Activated T-helper 2 cell treated with anti-CD3 and anti-CD28 coated beads, Interferon-gamma antibody, Interleukin-2, Interleukin-4, amounts not matched to agents 10 μg/mL and 5 μg/mL and 100 μg/mL, durations not matched to agents 14 hours and 24 hours and 36 hours (primary cell): ENCODE measurements at regions of chr6 and their contacts with region 1.

Region 1: DNA sequence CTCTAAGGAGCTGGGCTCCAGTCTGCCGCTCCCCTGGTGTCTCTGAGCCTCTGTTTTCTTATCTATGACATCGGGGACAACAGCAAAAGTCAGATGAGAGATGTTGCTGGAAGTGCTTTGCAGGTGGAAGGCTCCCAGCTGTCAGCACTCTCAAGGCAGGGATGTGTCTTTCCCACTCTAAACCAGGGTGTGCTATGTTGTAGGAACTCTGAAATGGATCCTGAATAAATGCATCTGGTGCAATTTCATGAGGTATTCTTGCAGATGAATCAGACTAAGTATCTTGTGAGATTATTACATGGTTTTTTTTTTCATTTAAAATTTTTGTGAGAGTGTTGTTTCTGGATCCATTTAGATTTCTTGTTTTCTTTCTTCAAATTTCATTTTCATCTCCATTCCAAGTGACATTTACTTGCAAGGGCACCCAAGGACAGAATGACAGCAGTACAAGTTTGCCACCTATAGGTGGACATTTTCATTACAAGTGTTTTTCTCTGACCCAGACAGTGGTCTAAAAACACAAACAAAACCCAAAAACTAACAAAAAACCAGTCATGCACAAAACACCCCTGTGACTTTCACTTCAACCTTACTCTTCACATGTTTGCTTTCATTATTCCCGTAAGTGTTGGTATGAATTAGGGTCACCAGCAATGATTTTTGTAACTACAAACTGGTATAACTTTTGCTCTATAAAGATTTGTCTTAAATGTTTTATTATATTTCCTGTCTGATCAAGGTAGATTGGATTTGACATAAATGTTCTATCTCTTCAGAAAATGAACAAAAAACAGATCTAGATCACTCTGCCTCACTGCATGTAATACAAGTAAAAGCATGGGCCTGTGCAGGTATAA is 14.7 kb upstream of the SIM1 start:
- DNase-seq: no peak
- H3K4me3 Mint-ChIP-seq: no peak overlapping the region
- H3K27ac Mint-ChIP-seq: no peak overlapping the region
- H3K4me1 Mint-ChIP-seq: peaks cover 14% of the 10 kb centered on the region
- H3K27me3 Mint-ChIP-seq: peaks cover 14% of the 10 kb centered on the region

Region 2: GRCh38 chr6:99868074-99868702 is 611.2 kb before region 1 on chr6:
- intact Hi-C with region 1: loop called (anchors 10 kb)
- DNase-seq: peak; percentile 48
- H3K4me3 Mint-ChIP-seq: no peak overlapping the region
- H3K27ac Mint-ChIP-seq: no peak overlapping the region
- H3K4me1 Mint-ChIP-seq: peaks cover 3% of the 10 kb centered on the region
- H3K27me3 Mint-ChIP-seq: peaks cover 27% of the 10 kb centered on the region

Region 3: DNA sequence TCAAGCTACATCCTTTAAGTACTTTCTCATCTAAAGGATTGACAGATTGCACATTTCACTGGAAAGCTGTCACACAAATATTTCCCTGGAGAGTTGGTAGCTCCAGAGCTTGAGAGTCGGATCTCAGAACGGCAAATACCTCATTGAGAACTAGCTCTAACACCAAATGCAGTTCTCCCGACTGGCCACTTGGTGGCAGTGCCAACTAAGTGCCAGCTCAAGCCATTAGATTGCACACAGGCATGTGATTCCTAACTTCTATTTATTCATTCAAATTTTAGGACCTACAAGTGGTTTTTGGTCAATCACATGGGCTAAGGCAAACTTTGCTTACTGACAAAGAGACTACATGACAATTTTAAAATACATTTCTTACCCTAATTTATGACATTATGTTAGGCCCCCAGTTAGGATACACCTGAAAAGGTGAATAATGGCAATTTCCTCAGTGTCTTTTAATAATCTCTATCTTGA is 477.5 kb before region 1 on chr6:
- intact Hi-C with region 1: loop called (anchors 1 kb)
- DNase-seq: no peak
- H3K4me3 Mint-ChIP-seq: no peak overlapping the region
- H3K27ac Mint-ChIP-seq: no peak overlapping the region
- H3K4me1 Mint-ChIP-seq: no peaks in the 10 kb centered on the region
- H3K27me3 Mint-ChIP-seq: peaks cover 17% of the 10 kb centered on the region

Region 4: GRCh38 chr6:100116411-100117194 is 362.8 kb before region 1 on chr6:
- intact Hi-C with region 1: loop called (anchors 1 kb)
- DNase-seq: no peak
- H3K4me3 Mint-ChIP-seq: no peak overlapping the region
- H3K27ac Mint-ChIP-seq: no peak overlapping the region
- H3K4me1 Mint-ChIP-seq: peaks cover 16% of the 10 kb centered on the region
- H3K27me3 Mint-ChIP-seq: peaks cover 13% of the 10 kb centered on the region

Region 5: DNA sequence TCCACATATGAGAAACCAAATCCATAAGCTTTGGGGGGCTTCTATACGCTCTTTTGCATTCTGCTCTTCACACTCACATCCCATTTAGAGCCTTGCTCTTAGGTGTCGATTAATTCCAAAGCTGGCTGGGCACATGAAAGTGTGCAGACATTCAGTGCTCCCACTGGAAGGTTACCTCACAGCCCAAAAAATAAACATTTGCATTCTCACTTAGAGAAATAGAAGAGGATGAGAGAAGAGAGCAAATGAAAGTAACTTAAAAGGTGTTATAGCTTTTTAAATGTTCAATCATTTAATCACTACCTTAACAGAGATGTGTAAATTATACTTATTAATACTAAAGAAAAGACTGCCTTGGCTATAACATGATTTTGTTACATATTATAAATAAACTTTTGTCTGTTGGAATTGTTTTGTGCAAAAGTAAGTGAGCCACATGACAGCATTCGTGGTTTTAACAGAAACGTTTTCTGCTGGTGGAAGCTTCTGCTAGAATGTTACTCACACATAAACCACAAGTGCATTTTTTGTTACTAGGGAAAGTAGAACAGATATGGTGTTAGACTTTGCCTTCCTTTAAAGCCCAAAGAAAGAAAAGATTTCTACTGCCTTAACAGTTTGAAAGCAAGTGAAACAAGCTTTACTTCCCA is 131.4 kb before region 1 on chr6:
- intact Hi-C with region 1: loop called (anchors 10 kb)
- DNase-seq: no peak
- H3K4me3 Mint-ChIP-seq: no peak overlapping the region
- H3K27ac Mint-ChIP-seq: no peak overlapping the region
- H3K4me1 Mint-ChIP-seq: peaks cover 17% of the 10 kb centered on the region
- H3K27me3 Mint-ChIP-seq: peaks cover 5% of the 10 kb centered on the region

Region 6: GRCh38 chr6:100512203-100512862 is 32.9 kb after region 1 on chr6:
- intact Hi-C with region 1: no loop called
- DNase-seq: no peak
- H3K4me3 Mint-ChIP-seq: no peak overlapping the region
- H3K27ac Mint-ChIP-seq: no peak overlapping the region
- H3K4me1 Mint-ChIP-seq: no peaks in the 10 kb centered on the region
- H3K27me3 Mint-ChIP-seq: no peaks in the 10 kb centered on the region

Region 7: GRCh38 chr6:100664274-100665040 is 185.1 kb after region 1 on chr6:
- intact Hi-C with region 1: loop called (anchors 5 kb)
- DNase-seq: no peak
- H3K4me3 Mint-ChIP-seq: no peak overlapping the region
- H3K27ac Mint-ChIP-seq: peak overlapping the region; percentile 35
- H3K4me1 Mint-ChIP-seq: peaks cover 8% of the 10 kb centered on the region
- H3K27me3 Mint-ChIP-seq: no peaks in the 10 kb centered on the region